IMR-90 (cell line): ENCODE measurements at regions of chr16 and their contacts with region 1.

Region 1: GRCh38 chr16:84970447-84971127 is 40.7 kb downstream of the ZDHHC7 start:
- DNase-seq: peak; percentile 76
- ATAC-seq: peak; percentile 84
- H3K4me3 ChIP-seq: no peak overlapping the region
- H3K27ac ChIP-seq: no peak overlapping the region
- H3K4me1 ChIP-seq: peaks cover 7% of the 10 kb centered on the region
- H3K27me3 ChIP-seq: no peaks in the 10 kb centered on the region
- CTCF ChIP-seq: peak; percentile 83
- POLR2A ChIP-seq: no peak
- RAD21 ChIP-seq: peak; percentile 91

Region 2: DNA sequence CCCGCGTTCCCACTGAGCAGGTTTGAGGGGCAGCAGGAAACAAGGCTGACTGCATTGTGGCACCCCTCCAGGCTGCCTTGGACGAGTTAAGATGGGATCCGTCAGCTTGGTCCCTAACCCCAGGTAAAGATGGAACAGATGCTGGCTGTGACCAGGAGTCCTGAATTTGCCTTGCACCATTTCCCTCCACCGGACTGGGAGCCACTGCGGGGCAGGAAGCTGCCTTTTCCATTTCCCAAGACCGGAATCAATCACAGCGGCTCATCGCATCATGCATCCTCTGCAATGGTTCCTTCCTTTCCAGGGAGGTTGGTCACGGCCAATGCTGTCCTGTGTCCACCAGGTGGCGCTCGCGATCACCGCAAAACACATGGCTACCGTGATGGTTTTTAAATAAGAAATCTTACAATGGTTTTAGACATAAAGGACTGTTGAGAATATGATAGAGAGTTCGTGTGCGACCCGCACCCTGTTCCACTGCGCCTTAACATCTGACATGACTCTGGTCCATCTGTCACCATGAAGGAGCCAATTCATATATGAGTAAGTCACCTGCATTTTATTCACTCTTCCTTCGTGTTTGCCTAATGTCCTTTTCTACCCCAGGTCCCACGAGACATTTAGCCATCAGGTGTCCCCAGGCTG is 459.3 kb before region 1 on chr16:
- CTCF ChIA-PET with region 1: no interaction called
- POLR2A ChIA-PET with region 1: no interaction called
- dilution Hi-C with region 1: no loop called
- in situ Hi-C with region 1: loop called (anchors 5 kb)
- intact Hi-C with region 1: loop called (anchors 10 kb)
- DNase-seq: peak; percentile 86
- ATAC-seq: peak; percentile 95
- H3K4me3 ChIP-seq: no peak overlapping the region
- H3K27ac ChIP-seq: no peak overlapping the region
- H3K4me1 ChIP-seq: peaks cover 8% of the 10 kb centered on the region
- H3K27me3 ChIP-seq: no peaks in the 10 kb centered on the region
- CTCF ChIP-seq: peak; percentile 90
- POLR2A ChIP-seq: no peak
- RAD21 ChIP-seq: peak; percentile 92

Region 3: DNA sequence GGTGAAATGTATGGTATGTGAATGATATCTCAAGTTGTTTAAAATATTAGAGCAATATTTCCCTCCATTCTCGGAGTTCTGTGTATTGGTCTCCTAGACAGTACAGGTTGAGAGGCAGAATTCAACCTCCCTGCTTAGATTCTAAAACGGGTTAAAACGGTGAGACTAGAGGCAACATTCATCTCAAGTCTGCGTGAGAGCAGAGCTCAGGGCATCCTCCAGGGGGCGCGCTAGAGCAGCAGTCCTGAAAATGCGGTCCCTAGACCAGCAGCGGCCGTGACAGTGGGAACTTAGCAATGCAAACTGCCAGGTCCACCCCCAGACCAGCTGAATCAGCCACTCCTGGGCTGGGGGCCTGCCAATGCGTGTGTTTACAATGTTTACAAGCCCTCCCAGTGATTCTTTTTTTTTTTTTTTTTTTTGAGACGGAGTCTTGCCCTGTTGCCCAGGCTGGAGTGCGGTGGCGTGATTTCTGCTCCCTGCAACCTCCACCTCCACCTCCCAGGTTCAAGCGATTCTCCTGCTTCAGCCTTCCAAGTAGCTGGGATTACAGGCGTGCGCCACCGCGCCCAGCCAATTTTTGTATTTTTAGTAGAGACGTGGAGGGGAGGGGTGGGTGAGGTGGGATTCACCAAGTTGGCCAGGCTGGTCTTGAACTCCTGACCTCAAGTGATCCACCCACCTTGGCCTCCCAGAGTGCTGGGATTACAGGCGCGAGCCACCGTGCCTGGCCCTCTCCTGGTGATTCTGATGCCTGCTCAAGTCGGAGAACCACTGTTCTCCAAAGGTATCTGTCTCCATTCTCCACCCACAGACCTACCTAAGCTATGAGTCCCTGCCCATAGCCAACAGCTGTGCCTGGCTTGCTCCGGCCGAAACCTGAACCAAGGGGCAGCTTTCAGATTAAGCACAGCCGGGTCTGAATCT is 298.0 kb before region 1 on chr16:
- CTCF ChIA-PET with region 1: no interaction called
- POLR2A ChIA-PET with region 1: no interaction called
- dilution Hi-C with region 1: no loop called
- in situ Hi-C with region 1: no loop called
- intact Hi-C with region 1: loop called (anchors 5 kb)
- DNase-seq: peak; percentile 68
- ATAC-seq: peak; percentile 95
- H3K4me3 ChIP-seq: no peak overlapping the region
- H3K27ac ChIP-seq: no peak overlapping the region
- H3K4me1 ChIP-seq: peaks cover 4% of the 10 kb centered on the region
- H3K27me3 ChIP-seq: no peaks in the 10 kb centered on the region
- CTCF ChIP-seq: peak; percentile 89
- POLR2A ChIP-seq: no peak
- RAD21 ChIP-seq: peak; percentile 82

Region 4: DNA sequence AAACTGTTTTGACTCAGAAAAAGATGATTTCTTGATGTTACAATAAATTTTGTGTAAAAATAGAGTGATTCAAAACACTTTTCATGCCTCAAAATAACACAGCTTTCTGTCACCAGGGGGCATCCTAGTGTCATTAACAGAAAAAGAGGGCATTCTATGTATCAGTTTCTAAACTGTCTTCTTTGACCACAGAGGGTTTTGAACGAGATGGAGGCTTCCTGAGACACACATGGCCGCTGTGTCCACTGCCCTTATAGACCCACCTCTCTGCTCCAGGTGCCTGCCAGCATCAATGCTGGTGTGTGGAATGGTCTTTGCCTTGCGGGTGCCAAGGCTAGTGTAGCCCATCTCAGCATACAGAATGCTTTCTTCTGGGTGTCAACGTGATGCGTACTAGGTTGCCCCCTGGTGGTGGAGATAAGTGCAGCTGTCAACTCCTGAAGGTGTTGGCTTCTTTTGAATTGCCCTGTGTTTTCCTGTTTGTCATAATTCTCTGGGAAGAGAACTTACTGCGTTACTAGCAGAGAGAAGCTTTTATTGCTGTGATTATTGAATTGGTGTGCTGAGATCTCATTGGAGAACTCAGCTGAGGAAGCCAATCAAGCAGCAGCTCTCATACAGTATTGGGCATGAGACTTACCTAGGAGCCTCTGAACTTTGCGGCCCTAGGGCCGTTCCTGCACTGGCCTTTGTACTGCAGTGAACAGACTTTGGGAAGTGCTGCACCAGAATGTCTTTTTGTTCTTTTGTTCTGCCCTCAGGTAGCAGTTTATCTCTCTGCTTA is 232.1 kb before region 1 on chr16:
- CTCF ChIA-PET with region 1: no interaction called
- POLR2A ChIA-PET with region 1: no interaction called
- dilution Hi-C with region 1: no loop called
- in situ Hi-C with region 1: no loop called
- intact Hi-C with region 1: loop called (anchors 5 kb)
- DNase-seq: peak; percentile 70
- ATAC-seq: peak; percentile 20
- H3K4me3 ChIP-seq: no peak overlapping the region
- H3K27ac ChIP-seq: no peak overlapping the region
- H3K4me1 ChIP-seq: peaks cover 25% of the 10 kb centered on the region
- H3K27me3 ChIP-seq: no peaks in the 10 kb centered on the region
- CTCF ChIP-seq: peak; percentile 65
- POLR2A ChIP-seq: no peak
- RAD21 ChIP-seq: peak; percentile 56

Region 5: DNA sequence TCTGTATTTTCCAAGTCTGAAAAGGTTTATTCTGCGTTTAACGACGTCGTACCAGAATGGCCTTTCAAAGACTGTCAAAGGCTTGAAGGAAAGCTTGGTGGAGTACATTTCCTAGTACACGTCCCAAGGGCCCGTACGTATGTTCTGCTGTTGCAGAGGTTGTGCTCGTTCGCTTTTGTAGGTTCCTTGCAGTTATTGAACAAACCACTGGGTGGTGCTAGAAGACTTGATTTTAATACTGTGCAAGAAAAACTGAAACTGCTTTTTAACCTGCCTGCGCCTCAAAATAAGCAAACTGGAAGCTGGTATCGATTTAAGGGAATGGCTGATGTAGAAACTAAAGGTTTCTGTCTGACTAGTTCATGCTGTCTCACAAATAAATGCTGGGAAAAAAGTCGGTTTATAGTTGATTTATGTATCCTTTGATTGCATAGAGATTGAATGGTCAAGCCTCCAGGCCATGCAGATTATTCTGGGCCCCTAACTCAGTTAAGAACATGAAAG is 216.2 kb before region 1 on chr16:
- CTCF ChIA-PET with region 1: interaction called, 8 read pairs
- POLR2A ChIA-PET with region 1: interaction called, 4 read pairs
- dilution Hi-C with region 1: no loop called
- in situ Hi-C with region 1: loop called (anchors 5 kb)
- intact Hi-C with region 1: loop called (anchors 1 kb)
- DNase-seq: peak; percentile 93
- ATAC-seq: peak; percentile 87
- H3K4me3 ChIP-seq: no peak overlapping the region
- H3K27ac ChIP-seq: peak overlapping the region; percentile 23; the same call in 1 of the 2 replicates
- H3K4me1 ChIP-seq: peaks cover 27% of the 10 kb centered on the region
- H3K27me3 ChIP-seq: no peaks in the 10 kb centered on the region
- CTCF ChIP-seq: peak; percentile 83
- POLR2A ChIP-seq: 0 out of 2 replicates have a peak, but pooled peaks have one; percentile 23
- RAD21 ChIP-seq: peak; percentile 85